Activated CD4-positive, alpha-beta memory T cell treated with anti-CD3 and anti-CD28 coated beads for 36 hours (primary cell): ENCODE measurements at regions of chr10 and their contacts with region 1.

Region 1: DNA sequence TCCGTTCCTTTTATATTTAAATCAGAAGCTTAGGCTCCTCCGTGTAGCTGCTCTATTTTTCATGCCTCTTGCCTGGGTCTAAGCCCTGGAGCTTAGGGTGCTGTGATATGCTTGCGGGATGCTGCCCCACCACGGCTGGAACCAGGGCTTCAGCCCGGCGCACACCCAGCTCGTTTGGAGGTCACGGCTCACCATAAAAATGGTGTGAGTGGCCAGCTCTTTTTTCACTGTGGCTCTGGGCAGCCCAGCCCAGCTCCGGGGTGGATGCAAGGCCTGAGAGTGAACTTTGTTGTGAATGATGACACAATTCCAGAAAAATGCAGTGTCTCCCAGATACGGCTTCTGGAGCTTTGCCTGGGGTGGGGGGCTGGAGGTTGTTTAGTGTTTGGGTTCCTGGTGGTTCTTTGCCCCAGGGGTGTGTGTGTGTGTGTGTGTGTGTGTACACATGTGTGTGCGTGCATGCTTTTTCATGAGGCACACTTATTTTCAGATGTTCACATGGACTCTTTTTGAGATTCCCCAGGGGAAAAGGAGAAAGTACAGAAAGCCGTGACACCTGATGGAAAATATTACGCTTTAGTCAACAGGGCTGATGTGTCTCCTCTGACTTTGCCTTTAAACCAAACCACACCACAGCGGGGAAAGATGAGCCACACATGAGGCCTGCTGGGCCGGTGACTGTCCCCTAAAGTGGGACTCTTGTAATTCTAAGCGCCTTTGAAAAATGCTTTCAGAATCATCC is 46.2 kb downstream of the GRK5 start:
- DNase-seq: peak; percentile 79
- H3K4me3 Mint-ChIP-seq: no peak overlapping the region
- H3K27ac Mint-ChIP-seq: peak overlapping the region; percentile 77
- H3K4me1 Mint-ChIP-seq: peaks cover 51% of the 10 kb centered on the region
- H3K27me3 Mint-ChIP-seq: no peaks in the 10 kb centered on the region

Region 2: DNA sequence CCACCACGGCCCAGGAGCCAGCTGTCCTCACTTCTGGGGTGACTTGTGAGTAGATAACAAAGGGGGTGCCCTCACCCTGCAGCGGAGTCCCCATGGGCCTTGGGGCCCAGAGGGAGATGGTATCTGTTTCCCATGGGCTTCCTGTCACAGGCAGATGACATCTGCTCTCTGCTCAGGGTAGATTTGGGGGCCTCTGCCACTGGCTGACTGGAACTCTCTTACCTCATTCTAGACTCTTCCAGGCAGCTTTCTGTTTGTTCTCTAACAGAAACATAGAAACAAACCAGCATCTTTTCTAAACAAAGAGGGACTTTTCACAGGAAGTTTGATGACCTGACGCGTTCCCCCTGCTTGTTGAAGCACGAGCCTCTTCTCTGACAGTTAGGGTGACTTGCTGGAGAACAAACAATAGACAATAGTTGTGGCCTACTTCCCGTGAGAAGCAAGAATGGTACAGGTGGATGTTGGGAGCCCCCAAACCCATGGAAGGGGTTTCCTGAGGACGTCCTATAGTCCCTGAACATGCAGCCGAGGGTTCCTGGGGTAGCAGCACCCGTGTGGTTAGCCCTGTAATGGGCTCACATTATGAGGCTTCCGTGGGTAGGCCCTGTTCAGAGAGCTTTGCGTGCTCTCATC is 15.4 kb after region 1 on chr10:
- CTCF ChIA-PET with region 1: no interaction called
- POLR2A ChIA-PET with region 1: no interaction called
- intact Hi-C with region 1: loop called (anchors 2 kb)
- DNase-seq: peak; percentile 83
- H3K4me3 Mint-ChIP-seq: peak overlapping the region; percentile 7
- H3K27ac Mint-ChIP-seq: peak overlapping the region; percentile 97
- H3K4me1 Mint-ChIP-seq: peaks cover 43% of the 10 kb centered on the region
- H3K27me3 Mint-ChIP-seq: no peaks in the 10 kb centered on the region

Region 3: DNA sequence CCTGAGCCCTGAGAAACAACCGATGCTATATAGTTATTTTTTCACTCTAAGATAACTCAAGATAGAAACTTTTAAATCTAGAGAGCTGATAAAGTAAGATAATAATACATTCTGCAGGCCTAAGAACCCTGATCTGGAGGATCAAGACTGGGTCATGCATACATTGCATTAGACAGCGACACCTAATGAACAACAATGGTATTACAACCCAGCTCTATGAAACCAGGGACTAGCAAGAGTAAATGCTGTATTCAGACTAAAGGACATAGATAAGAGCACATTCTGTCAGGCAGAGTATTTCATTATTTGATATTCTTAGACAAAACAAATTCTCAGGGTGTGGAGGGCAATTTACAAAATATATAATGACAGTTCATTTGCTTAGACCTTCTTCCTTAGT is 102.3 kb after region 1 on chr10:
- CTCF ChIA-PET with region 1: no interaction called
- POLR2A ChIA-PET with region 1: no interaction called
- intact Hi-C with region 1: no loop called
- DNase-seq: no peak
- H3K4me3 Mint-ChIP-seq: no peak overlapping the region
- H3K27ac Mint-ChIP-seq: no peak overlapping the region
- H3K4me1 Mint-ChIP-seq: peaks cover 3% of the 10 kb centered on the region
- H3K27me3 Mint-ChIP-seq: no peaks in the 10 kb centered on the region

Region 4: DNA sequence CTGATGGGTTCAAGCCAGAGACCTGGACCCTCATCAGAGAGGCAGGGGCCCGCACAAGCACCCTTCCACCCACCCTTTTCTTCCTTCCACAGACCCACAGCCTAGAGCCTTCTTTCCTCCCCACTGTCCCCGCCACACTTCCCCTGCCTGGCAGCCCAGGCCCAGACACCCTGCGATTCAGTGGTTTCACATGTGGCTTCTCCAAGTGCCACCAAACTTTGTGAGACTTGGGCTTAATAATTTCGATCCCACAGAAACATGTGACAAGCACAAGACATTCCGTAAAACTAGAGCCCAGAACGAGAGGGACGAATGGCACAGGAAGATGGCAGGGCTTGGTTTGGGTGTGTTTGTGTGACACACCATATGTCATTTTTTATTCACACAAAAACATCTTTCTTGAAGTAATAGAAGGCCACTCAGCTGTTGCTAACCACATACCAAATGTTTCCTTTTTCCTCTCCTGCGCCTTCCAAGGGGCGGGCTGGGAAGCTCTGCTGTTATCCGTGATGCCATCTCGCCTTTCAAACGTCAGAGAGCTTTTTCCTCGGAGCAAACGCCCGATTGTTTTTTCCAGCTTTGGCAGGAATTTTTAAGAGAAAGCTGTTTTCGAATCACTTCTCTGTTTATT is 116.6 kb after region 1 on chr10:
- CTCF ChIA-PET with region 1: no interaction called
- POLR2A ChIA-PET with region 1: no interaction called
- intact Hi-C with region 1: loop called (anchors 10 kb)
- DNase-seq: no peak
- H3K4me3 Mint-ChIP-seq: no peak overlapping the region
- H3K27ac Mint-ChIP-seq: peak overlapping the region; percentile 6
- H3K4me1 Mint-ChIP-seq: peaks cover 25% of the 10 kb centered on the region
- H3K27me3 Mint-ChIP-seq: no peaks in the 10 kb centered on the region